ENCODE measurements at regions of chr15 and their contacts with region 1.

Region 1: GRCh38 chr15:31488426-31489204 is 162.0 kb downstream of the KLF13 start:
- DNase-seq: peak; percentile 84 to 90 (median 87)
- H3K4me3 ChIP-seq: no peak overlapping the region
- H3K27ac ChIP-seq: no peak overlapping the region
- H3K4me1 ChIP-seq: peaks cover 0 to 10% (median 2%) of the 10 kb centered on the region in 4 experiments
- H3K27me3 ChIP-seq: peaks cover 0 to 23% (median 14%) of the 10 kb centered on the region in 5 experiments

Region 2: GRCh38 chr15:31200735-31201151 is 287.9 kb before region 1 on chr15:
- CTCF ChIA-PET with region 1: interaction called, 18 read pairs
- POLR2A ChIA-PET with region 1: no interaction called
- DNase-seq: peak; percentile 57 to 61 (median 58)
- H3K4me3 ChIP-seq: no peak overlapping the region
- H3K27ac ChIP-seq: no peak overlapping the region
- H3K4me1 ChIP-seq: no peaks in the 10 kb centered on the region
- H3K27me3 ChIP-seq: no peaks in the 10 kb centered on the region

Region 3: DNA sequence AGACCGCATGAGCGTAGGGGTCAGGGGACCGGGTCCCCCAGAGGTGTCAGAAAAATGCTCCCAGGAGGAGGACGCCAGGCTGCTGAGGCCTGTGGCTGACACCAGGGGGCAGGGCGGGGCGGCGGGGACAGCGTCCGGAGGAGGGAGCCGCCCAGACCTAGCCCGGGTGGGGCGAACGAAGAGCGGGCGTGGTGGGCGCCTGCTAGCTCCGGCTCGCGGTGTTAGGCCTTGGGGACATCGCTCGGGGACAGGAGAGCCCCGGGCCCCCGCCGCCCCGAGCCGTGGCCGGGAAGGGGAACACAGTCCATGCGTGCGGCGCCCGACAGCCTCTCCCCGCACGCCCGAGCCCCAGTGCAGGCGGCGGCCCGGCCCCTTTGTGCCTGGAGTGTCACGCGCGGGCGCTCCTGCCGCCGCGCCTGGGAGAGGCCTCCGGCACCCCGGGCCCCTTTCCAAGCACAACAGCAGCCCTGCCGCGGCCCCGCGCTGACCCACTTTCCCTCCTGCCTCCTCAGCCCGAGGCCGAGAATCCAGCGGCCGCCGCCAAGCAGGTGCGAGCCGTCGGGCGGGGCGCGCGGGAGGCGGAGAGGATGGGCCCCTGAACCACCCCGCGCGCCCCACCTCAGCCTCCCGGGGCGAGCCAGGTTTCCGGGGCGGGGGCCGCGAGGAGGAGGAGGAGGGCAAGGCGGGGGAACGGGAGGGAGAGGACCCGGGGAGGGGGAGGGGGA is 273.0 kb before region 1 on chr15:
- CTCF ChIA-PET with region 1: interaction called, 40 read pairs
- POLR2A ChIA-PET with region 1: no interaction called
- DNase-seq: peak; percentile 65 to 84 (median 76)
- H3K4me3 ChIP-seq: peak overlapping the region; percentile 33 to 77 (median 59)
- H3K27ac ChIP-seq: no peak overlapping the region
- H3K4me1 ChIP-seq: peaks cover 3 to 48% (median 17%) of the 10 kb centered on the region in 4 experiments
- H3K27me3 ChIP-seq: no peaks in the 10 kb centered on the region

Region 4: GRCh38 chr15:31265871-31266711 is 222.5 kb before region 1 on chr15:
- CTCF ChIA-PET with region 1: interaction called, 13 read pairs
- POLR2A ChIA-PET with region 1: no interaction called
- DNase-seq: peak; percentile 75 to 98 (median 97)
- H3K4me3 ChIP-seq: peak overlapping the region in 3 of 7 experiments; percentile 12 to 39 (median 29)
- H3K27ac ChIP-seq: peak overlapping the region in 1 of 2 experiments; percentile 43
- H3K4me1 ChIP-seq: peaks cover 16 to 85% (median 76%) of the 10 kb centered on the region in 4 experiments
- H3K27me3 ChIP-seq: no peaks in the 10 kb centered on the region

Region 5: GRCh38 chr15:31365655-31366127 is 122.9 kb before region 1 on chr15:
- CTCF ChIA-PET with region 1: interaction called, 62 read pairs
- POLR2A ChIA-PET with region 1: no interaction called
- DNase-seq: peak; percentile 89 to 97 (median 94)
- H3K4me3 ChIP-seq: peak overlapping the region in 1 of 7 experiments; percentile 43
- H3K27ac ChIP-seq: no peak overlapping the region
- H3K4me1 ChIP-seq: peaks cover 34 to 71% (median 58%) of the 10 kb centered on the region in 4 experiments
- H3K27me3 ChIP-seq: no peaks in the 10 kb centered on the region

Region 6: DNA sequence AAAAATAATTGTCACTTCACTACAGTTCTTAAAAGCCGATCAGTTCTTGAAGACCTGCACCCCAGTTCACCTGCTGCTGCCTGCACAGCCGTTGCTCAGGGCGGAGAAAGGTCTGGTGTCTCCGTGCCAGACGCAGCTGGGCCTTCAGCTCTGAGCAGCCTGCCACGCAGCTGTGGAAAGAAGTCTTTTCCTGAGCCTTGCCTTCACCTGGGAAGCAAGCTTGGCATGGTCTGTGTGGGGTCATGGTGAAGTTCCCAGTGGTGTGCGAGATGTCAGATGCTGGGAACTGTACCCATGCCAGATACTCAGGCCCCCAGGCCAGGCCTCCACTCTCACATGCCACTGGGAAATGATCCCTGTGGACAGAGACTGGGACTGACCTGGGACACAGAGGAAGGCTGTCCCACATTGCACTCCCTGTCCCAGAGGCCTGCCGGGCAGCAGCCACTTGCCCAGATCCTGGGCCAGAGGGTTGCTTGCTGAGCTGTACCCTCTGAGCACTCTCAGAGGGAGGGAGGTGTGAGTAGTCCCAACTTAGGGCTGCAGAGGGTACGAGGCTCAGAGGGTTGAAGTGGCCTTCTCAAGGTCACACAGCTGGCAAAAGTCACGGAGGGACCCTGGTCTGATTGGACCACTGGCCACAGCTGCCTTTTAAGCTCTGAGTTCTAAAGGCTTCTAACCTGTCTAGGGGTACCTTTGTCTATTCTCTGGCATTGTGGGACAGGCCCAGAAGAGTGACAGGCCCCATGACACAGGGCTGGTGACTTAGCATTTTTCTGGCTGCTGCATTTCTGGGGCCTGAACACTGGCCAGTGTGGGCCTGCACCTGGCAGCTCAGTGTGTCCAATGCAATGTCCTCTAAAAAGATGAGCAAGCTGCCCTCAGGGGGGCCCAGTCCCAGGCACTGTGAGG is 106.6 kb before region 1 on chr15:
- CTCF ChIA-PET with region 1: interaction called, 10 read pairs
- POLR2A ChIA-PET with region 1: no interaction called
- DNase-seq: peak in 1 of 3 donors; percentile 29
- H3K4me3 ChIP-seq: no peak overlapping the region
- H3K27ac ChIP-seq: no peak overlapping the region
- H3K4me1 ChIP-seq: peaks cover 0 to 11% (median 3%) of the 10 kb centered on the region in 4 experiments
- H3K27me3 ChIP-seq: no peaks in the 10 kb centered on the region

Region 7: DNA sequence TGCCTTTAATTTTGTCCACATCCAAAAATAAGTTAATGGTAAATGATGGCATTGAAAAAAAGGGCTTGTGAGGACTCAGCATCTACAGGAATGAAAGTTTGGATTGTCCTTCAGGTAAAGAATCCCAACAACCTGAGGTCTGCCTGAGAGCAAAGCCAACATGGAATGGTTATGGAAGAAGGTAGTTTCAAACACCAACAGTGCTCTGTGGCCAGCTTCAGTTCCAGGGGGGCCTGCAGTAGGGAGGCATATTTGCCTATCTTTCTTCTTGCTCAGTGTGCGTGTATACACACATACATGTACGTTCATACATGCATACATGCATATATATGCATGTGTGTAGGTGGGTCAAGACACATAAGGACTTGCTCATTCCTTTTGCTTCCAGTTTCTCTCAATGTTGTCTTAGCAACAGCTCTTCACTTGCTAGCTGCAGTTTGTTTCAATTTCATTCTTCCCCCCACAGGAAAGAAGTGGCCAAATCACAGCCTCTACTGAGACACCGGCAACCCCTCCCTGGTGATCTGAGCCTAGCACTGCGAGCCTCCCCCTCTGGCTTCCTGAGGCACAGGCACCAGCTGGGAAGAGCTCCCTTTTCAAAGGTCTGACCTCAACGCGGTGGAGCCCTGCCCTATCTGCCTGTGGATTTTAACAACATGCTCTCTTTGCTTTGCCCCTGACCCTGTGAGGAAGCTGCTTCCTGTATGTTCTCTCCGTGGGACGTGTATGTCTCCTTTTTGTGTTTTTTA is 15.8 kb before region 1 on chr15:
- CTCF ChIA-PET with region 1: interaction called, 36 read pairs
- POLR2A ChIA-PET with region 1: no interaction called
- DNase-seq: peak in 2 of 3 donors; percentile 62 to 64
- H3K4me3 ChIP-seq: peak overlapping the region in 4 of 7 experiments; percentile 15 to 54 (median 18)
- H3K27ac ChIP-seq: no peak overlapping the region
- H3K4me1 ChIP-seq: peaks cover 0 to 18% (median 10%) of the 10 kb centered on the region in 4 experiments
- H3K27me3 ChIP-seq: no peaks in the 10 kb centered on the region

Measured in common myeloid progenitor, CD34-positive (primary cell).